ENCODE measurements at regions of chr6 and their contacts with region 1.

Region 1: DNA sequence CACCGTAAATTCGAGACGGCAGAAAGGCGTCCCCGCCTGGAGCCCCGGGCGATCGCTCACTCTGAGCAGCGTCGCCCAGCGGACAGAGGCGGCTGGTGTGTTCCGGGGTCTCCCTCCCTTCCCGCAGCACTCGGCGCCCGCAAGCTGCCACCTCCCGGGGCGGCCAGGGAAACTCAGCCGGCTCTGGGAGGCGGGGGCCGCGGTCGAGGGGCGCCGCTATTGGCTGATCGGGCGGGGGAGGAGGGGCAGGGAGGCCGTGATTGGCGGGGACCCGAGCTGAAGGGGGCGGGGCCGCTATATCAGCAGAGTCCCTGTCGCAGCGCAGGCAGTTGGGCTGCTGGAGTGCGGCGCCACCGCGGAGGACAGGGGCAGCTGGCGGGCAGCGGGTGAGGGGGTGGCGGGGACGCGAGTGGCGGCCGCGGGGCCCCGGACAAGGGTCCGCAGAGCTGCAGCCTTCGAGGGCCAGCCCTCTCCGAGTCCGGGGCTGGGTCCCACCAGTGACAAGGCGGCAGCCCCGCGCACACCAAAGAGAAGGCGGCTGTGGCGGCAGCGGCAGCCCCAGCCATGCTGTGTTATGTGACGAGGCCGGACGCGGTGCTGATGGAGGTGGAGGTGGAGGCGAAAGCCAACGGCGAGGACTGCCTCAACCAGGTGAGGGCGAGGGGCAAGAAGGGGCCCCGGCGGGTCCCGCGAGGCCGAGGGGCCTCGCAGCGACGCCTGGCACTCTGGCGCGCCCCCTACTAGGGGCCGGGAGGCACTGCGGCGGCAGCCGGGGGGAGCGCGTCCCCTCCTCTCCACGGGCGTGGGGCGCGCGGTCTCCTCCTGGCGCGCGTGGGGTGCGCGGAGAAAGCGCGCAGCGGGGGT is at the start of gene MYLIP:
- DNase-seq: peak; percentile 96
- ATAC-seq: peak; percentile 88
- H3K4me3 Mint-ChIP-seq: peak within 1 kb of the TSS; percentile 92
- H3K27ac Mint-ChIP-seq: peak within 1 kb of the TSS; percentile 83
- H3K4me1 Mint-ChIP-seq: peaks cover 59% of the 10 kb centered on the region
- H3K27me3 Mint-ChIP-seq: no peaks in the 10 kb centered on the region
- CTCF ChIP-seq: no peak
- total RNA-seq, gene MYLIP: 9.7 and 10.3 TPM in 2 replicates

Region 2: DNA sequence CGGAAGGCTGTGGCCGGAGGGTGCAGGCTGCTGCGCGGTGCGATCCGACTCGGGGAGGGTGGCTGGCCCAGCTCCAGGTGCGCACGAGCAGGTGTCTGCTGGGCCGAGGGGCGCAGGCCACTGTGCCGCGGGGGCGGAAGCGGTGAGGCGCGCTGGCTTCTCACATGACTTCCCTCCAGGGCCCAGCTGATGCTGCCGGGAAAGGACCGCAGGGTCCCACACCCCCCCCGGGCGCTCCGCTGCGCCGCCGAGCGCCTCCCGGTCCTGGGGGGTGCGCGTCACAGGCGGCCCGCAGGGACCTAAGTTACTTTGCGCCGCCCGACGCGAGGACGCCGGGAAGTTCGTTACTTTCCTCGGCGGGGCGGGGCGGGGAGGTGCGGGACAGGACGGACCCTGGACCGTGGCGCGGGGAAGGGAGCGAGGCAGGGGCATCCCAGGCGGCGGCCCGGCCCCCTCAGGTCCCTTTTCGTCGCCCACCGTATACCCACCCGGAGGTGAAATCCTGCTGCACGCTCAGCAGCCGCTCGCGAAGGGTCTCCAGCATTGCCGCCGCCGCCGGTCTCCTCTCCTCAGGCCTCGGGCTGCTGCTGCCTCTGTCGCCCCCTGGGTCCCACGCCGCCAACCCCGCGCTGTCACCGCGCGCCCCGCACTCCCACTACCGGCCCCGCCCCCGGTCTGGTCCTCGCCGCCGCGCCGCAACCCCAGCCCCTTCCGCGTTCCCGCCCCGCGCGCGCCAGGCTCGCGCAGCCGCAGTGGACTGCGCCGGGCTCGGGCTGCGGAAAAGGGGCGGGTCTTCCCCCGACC is 466.5 kb before region 1 on chr6 and contains the start of gene DTNBP1:
- CTCF ChIA-PET with region 1: no interaction called
- POLR2A ChIA-PET with region 1: interaction called, 8 read pairs
- intact Hi-C with region 1: loop called (anchors 1 kb)
- DNase-seq: peak; percentile 94
- ATAC-seq: peak; percentile 73
- H3K4me3 Mint-ChIP-seq: peak within 1 kb of the TSS; percentile 87
- H3K27ac Mint-ChIP-seq: peak within 1 kb of the TSS; percentile 89
- H3K4me1 Mint-ChIP-seq: peaks cover 49% of the 10 kb centered on the region
- H3K27me3 Mint-ChIP-seq: no peaks in the 10 kb centered on the region
- CTCF ChIP-seq: no peak
- total RNA-seq, gene DTNBP1: 50.3 and 51.6 TPM in 2 replicates

Region 3: DNA sequence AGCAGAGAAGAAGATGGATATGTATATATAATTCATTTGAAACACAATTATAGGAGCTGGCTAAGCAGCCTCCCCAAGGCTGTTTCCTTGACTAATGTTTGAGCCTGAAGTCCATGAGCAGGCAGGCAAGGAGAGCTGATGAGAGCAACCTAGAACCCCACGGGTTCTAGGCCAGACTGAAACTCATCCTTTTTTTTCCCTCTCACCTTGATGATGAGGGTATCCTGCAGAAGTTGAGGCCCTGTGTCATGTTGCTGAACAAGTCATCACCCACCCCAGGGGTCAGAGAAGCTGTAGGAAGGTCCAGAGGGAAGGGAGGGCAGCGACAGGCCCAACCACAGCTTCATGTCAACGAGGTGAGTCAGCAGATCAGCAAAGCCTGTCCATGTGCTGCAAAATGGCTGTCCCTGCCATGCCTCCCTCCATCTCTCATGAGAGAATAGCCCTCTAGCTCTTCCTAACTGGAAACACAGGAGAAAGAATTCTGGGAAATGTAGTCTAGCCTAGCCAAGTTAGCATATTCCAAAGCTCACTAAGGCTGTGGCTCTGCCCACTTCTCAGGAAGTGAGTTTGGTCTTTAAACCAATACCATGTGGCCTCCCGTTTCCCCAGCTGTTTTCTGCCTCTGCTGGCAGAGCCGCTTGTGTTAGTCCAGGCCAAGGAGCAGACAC is 374.8 kb before region 1 on chr6:
- CTCF ChIA-PET with region 1: no interaction called
- POLR2A ChIA-PET with region 1: interaction called, 5 read pairs
- intact Hi-C with region 1: loop called (anchors 5 kb)
- DNase-seq: no peak
- ATAC-seq: no peak
- H3K4me3 Mint-ChIP-seq: no peak overlapping the region
- H3K27ac Mint-ChIP-seq: no peak overlapping the region
- H3K4me1 Mint-ChIP-seq: no peaks in the 10 kb centered on the region
- H3K27me3 Mint-ChIP-seq: no peaks in the 10 kb centered on the region
- CTCF ChIP-seq: no peak

Region 4: GRCh38 chr6:15800841-15801617 is 328.0 kb before region 1 on chr6:
- CTCF ChIA-PET with region 1: no interaction called
- POLR2A ChIA-PET with region 1: no interaction called
- intact Hi-C with region 1: no loop called
- DNase-seq: no peak
- ATAC-seq: no peak
- H3K4me3 Mint-ChIP-seq: no peak overlapping the region
- H3K27ac Mint-ChIP-seq: no peak overlapping the region
- H3K4me1 Mint-ChIP-seq: no peaks in the 10 kb centered on the region
- H3K27me3 Mint-ChIP-seq: no peaks in the 10 kb centered on the region
- CTCF ChIP-seq: no peak

Region 5: DNA sequence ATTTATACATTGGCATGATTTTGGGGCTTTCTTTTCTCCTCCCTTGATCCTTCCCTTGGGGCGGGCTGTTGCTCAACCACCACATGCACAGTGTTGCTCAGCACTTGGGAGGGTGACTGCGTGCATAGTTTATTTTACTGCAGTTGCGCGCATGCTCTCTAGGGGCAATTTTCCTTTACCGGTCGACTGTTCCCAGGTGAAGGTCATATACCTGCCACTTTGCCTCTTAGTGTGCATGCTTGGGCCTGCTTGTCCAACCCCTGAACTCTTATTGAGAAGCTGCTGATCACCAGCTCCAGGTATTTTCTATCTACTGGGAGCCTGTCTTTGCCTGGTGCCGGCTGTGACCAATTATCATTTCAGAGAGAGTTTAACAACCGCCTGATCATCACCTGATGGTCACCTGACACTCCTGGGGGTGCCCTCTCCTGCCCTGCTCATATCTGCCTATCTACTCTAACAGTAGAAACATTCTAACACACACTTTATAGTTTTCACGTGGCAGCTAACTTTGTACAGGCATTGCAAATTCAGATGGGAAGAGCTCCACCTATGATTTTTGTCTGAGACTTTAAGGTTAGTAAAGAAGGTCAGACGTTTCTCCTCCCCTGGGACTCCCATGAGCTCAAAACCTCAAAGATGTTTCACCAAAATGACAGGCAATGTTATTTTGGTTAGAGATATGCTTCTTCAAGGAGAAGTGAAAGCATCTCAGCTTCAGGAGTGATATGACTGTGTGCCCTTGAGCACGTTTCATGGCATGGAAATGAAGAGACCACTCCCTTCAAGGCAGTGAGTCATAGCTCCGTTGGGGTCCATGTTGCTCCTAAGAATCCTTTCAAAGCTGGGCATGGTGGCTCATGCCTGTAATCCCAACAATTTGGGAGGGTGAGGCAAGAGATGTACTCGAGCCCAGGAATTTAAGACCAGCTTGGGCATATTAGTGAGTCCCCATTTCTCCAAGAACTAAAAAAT is 227.6 kb before region 1 on chr6:
- CTCF ChIA-PET with region 1: interaction called, 14 read pairs
- POLR2A ChIA-PET with region 1: interaction called, 64 read pairs
- intact Hi-C with region 1: loop called (anchors 1 kb)
- DNase-seq: peak; percentile 39
- ATAC-seq: peak; percentile 80
- H3K4me3 Mint-ChIP-seq: peak overlapping the region; percentile 80
- H3K27ac Mint-ChIP-seq: peak overlapping the region; percentile 98
- H3K4me1 Mint-ChIP-seq: peaks cover 83% of the 10 kb centered on the region
- H3K27me3 Mint-ChIP-seq: no peaks in the 10 kb centered on the region
- CTCF ChIP-seq: no peak

Region 6: DNA sequence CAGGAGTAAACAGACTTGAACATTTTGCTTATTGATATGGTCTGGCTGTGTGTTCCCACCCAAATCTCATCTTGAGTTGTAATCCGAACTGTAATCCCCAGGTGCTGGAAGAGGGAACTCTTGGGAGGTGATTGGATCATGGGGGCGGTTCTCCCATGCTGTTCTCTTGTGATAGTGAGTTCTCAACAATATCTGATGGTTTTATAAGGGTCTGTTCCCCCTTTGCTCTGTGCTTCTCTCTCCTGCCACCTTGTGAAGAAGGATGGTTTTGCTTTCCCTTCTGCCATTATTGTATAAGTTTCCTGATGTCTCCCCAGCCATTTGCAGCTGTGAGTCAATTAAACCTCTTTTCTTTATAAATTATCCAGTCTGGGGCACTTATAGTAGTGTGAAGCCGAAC is 39.9 kb after region 1 on chr6:
- CTCF ChIA-PET with region 1: interaction called, 5 read pairs
- POLR2A ChIA-PET with region 1: no interaction called
- intact Hi-C with region 1: loop called (anchors 5 kb)
- DNase-seq: no peak
- ATAC-seq: peak; percentile 37
- H3K4me3 Mint-ChIP-seq: no peak overlapping the region
- H3K27ac Mint-ChIP-seq: no peak overlapping the region
- H3K4me1 Mint-ChIP-seq: no peaks in the 10 kb centered on the region
- H3K27me3 Mint-ChIP-seq: peaks cover 7% of the 10 kb centered on the region
- CTCF ChIP-seq: no peak

Region 7: GRCh38 chr6:16206595-16207037 is 77.6 kb after region 1 on chr6:
- CTCF ChIA-PET with region 1: interaction called, 14 read pairs
- POLR2A ChIA-PET with region 1: interaction called, 15 read pairs
- intact Hi-C with region 1: loop called (anchors 1 kb)
- DNase-seq: no peak
- ATAC-seq: peak; percentile 48
- H3K4me3 Mint-ChIP-seq: peak overlapping the region; percentile 32
- H3K27ac Mint-ChIP-seq: peak overlapping the region; percentile 31
- H3K4me1 Mint-ChIP-seq: peaks cover 27% of the 10 kb centered on the region
- H3K27me3 Mint-ChIP-seq: peaks cover 14% of the 10 kb centered on the region
- CTCF ChIP-seq: peak; percentile 85

Region 8: GRCh38 chr6:16238057-16238962 is 109.3 kb after region 1 on chr6 and contains the start of gene GMPR:
- CTCF ChIA-PET with region 1: no interaction called
- POLR2A ChIA-PET with region 1: no interaction called
- intact Hi-C with region 1: no loop called
- DNase-seq: peak; percentile 57
- ATAC-seq: peak; percentile 87
- H3K4me3 Mint-ChIP-seq: peak within 1 kb of the TSS; percentile 91
- H3K27ac Mint-ChIP-seq: peak within 1 kb of the TSS; percentile 57
- H3K4me1 Mint-ChIP-seq: peaks cover 34% of the 10 kb centered on the region
- H3K27me3 Mint-ChIP-seq: peaks cover 24% of the 10 kb centered on the region
- CTCF ChIP-seq: no peak
- total RNA-seq, gene GMPR: 0.47 and 0.98 TPM in 2 replicates